Endothelial cell of umbilical vein (primary cell): ENCODE measurements at regions of chr16 and their contacts with region 1.

Region 1: DNA sequence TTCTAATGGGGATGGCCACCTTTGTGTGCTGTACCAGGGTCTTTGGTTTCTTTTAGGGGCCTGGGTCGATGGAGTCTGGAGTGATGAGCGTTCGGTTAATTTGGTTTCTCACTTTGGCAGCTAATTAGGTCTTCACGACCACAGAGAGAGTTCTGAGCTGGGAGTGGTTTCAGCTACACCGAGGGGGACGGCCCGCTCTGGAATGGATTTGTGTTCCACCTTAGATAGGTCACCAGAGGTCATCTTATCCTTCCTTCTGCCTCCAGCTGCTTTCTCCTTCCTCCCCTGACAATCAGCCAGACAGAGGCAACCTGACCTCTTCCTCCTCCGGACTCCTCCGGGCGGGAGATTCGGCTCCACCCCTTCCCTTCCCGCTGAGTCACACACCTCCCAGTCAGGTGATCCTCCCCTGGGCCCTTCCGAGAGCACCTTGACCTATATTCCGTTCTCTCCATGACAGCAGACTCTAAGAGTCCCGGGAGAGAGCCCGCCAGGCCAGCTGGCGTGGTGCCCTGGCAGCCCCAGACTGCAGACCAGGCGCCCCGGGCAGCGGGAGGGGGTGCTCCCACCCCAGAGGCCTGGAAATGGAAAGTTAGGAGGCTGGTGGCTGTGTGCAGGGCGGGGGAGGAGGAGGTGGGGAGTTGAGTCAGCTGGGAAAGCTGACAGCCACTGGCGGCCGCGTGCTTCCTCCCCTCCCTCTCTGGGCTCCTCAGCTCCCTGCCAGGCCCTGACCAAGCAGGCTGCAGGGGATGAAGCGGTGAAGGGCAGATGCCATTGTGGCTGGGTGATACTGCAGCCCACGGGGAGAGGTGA is 44.7 kb downstream of the CHD9 start:
- DNase-seq: peak; percentile 94
- H3K4me3 ChIP-seq: peak overlapping the region in 2 of 3 experiments; percentile 18 to 23
- H3K27ac ChIP-seq: peak overlapping the region; percentile 98
- H3K4me1 ChIP-seq: peaks cover 43% of the 10 kb centered on the region
- H3K27me3 ChIP-seq: no peaks in the 10 kb centered on the region
- CTCF ChIP-seq: no peak
- POLR2A ChIP-seq: no peak

Region 2: DNA sequence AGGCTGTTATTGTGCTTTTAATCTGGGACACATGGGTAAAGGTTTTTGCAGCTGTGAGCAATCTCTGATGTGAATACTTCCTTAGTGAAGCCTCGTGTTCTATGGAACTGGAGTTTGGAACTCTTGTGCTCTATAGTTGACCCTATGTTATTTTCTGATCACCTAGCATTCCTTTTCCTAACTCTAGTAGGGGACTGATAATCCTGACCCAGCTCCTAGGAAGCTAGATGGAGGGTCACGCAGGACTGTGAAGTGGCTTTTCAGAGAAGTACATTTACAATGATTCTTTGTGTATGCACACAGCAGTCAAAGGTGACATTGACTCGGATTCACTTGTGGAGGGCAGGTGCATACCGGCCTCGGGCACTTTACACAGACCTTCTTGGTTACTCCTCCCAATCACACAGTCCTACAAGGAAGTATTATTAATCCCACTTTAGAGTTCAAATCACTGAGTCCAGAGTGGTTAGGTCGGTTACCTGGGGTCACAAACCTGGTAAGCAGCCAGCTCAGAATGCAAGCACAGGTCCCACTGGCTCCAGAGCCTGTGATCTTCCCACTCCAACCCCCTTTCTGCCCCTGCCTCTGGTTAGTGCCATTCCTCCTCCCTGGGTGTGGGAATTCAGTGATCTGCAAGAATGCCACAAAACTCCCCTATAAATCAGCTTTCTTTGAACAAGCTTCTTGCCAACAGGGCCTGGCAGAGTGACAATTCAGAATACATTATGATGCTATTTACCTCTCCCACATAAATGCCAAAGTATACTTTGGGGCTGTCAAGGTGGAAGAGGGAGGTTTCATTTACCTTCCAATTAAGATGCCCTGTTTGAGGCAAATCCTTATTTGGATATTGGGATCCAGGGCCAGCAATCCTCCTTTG is 53.9 kb before region 1 on chr16:
- CTCF ChIA-PET with region 1: no interaction called
- POLR2A ChIA-PET with region 1: no interaction called
- dilution Hi-C with region 1: no loop called
- intact Hi-C with region 1: no loop called
- DNase-seq: no peak
- H3K4me3 ChIP-seq: no peak overlapping the region
- H3K27ac ChIP-seq: no peak overlapping the region
- H3K4me1 ChIP-seq: peaks cover 5% of the 10 kb centered on the region
- H3K27me3 ChIP-seq: peaks cover 22 to 39% of the 10 kb centered on the region in 2 experiments
- CTCF ChIP-seq: no peak
- POLR2A ChIP-seq: no peak

Region 3: GRCh38 chr16:53071748-53072301 is 27.7 kb before region 1 on chr16:
- CTCF ChIA-PET with region 1: no interaction called
- POLR2A ChIA-PET with region 1: no interaction called
- dilution Hi-C with region 1: no loop called
- intact Hi-C with region 1: loop called (anchors 2 kb)
- DNase-seq: peak; percentile 88
- H3K4me3 ChIP-seq: peak overlapping the region in 1 of 3 experiments; percentile 23
- H3K27ac ChIP-seq: peak overlapping the region; percentile 5
- H3K4me1 ChIP-seq: peaks cover 11% of the 10 kb centered on the region
- H3K27me3 ChIP-seq: no peaks in the 10 kb centered on the region
- CTCF ChIP-seq: no peak
- POLR2A ChIP-seq: no peak

Region 4: GRCh38 chr16:53080345-53081031 is 19.0 kb before region 1 on chr16:
- CTCF ChIA-PET with region 1: interaction called, 9 read pairs
- POLR2A ChIA-PET with region 1: no interaction called
- dilution Hi-C with region 1: no loop called
- intact Hi-C with region 1: loop called (anchors 2 kb)
- DNase-seq: peak; percentile 80
- H3K4me3 ChIP-seq: no peak overlapping the region
- H3K27ac ChIP-seq: peak overlapping the region; percentile 74
- H3K4me1 ChIP-seq: peaks cover 32% of the 10 kb centered on the region
- H3K27me3 ChIP-seq: no peaks in the 10 kb centered on the region
- CTCF ChIP-seq: no peak
- POLR2A ChIP-seq: no peak

Region 5: GRCh38 chr16:53130159-53131049 is 30.9 kb after region 1 on chr16:
- CTCF ChIA-PET with region 1: interaction called, 8 read pairs
- POLR2A ChIA-PET with region 1: no interaction called
- dilution Hi-C with region 1: no loop called
- intact Hi-C with region 1: loop called (anchors 1 kb)
- DNase-seq: peak; percentile 96
- H3K4me3 ChIP-seq: peak overlapping the region; percentile 71 to 92 (median 74)
- H3K27ac ChIP-seq: peak overlapping the region; percentile 89
- H3K4me1 ChIP-seq: peaks cover 18% of the 10 kb centered on the region
- H3K27me3 ChIP-seq: no peaks in the 10 kb centered on the region
- CTCF ChIP-seq: peak; percentile 55 to 63
- POLR2A ChIP-seq: peak; percentile 68

Region 6: GRCh38 chr16:53159781-53160436 is 60.4 kb after region 1 on chr16:
- CTCF ChIA-PET with region 1: interaction called, 3 read pairs
- POLR2A ChIA-PET with region 1: no interaction called
- dilution Hi-C with region 1: no loop called
- intact Hi-C with region 1: loop called (anchors 1 kb)
- DNase-seq: peak; percentile 70
- H3K4me3 ChIP-seq: no peak overlapping the region
- H3K27ac ChIP-seq: no peak overlapping the region
- H3K4me1 ChIP-seq: no peaks in the 10 kb centered on the region
- H3K27me3 ChIP-seq: no peaks in the 10 kb centered on the region
- CTCF ChIP-seq: peak; percentile 54 to 66
- POLR2A ChIP-seq: no peak

Region 7: DNA sequence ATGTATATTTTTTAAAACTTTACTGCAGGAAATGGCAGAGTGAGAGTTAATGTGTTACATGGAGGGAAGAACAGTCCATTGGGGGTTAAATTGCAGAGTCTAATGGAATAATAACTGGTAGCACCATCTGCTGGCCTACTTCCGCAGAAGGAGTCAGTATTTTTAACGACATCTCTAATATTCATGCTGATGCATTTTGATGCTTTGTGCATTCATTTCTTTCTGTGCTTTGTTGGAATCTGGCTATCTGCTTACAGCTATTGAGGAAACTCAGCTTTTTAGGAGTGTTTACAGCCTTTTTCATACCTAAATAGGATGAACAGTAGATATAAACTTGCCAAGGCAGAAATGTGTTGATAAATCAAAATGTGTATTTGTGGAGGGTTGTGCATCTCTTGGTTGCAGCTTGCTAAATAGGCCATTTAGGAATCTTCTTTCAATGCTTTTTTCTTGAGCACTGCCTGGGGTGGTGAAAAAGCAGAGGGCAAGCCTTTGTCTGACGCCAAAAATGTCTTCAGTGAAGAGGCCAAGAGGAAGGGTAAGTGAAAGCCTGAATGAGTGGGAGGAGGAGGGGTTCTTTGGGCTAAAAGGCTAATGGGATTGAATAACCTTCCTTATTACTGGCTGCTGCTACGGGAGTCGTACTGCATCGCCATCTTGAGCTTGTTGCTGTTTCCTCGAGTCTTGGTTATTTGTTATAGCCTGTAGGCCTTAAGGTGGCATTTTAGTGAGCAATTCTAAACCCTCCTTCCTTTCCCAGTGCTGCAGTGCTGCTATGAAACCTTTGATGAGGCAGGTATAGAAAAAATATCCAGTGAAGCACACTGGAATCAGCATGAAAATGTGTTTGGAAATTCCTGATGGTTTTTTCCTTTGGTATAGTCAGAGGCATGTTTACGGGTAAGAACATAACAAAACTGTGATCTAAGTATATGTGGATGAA is 108.6 kb after region 1 on chr16:
- CTCF ChIA-PET with region 1: interaction called, 6 read pairs
- POLR2A ChIA-PET with region 1: no interaction called
- dilution Hi-C with region 1: no loop called
- intact Hi-C with region 1: loop called (anchors 1 kb)
- DNase-seq: peak; percentile 88
- H3K4me3 ChIP-seq: peak overlapping the region; percentile 34 to 91 (median 70)
- H3K27ac ChIP-seq: peak overlapping the region; percentile 92
- H3K4me1 ChIP-seq: peaks cover 41% of the 10 kb centered on the region
- H3K27me3 ChIP-seq: no peaks in the 10 kb centered on the region
- CTCF ChIP-seq: peak; percentile 33 to 51
- POLR2A ChIP-seq: peak; percentile 53

Region 8: GRCh38 chr16:54856871-54857270 is 1757.3 kb after region 1 on chr16:
- CTCF ChIA-PET with region 1: no interaction called
- POLR2A ChIA-PET with region 1: no interaction called
- dilution Hi-C with region 1: no loop called
- intact Hi-C with region 1: no loop called
- DNase-seq: no peak
- H3K4me3 ChIP-seq: no peak overlapping the region
- H3K27ac ChIP-seq: no peak overlapping the region
- H3K4me1 ChIP-seq: no peaks in the 10 kb centered on the region
- H3K27me3 ChIP-seq: no peaks in the 10 kb centered on the region
- CTCF ChIP-seq: no peak
- POLR2A ChIP-seq: no peak